Calu3 (cell line): ENCODE measurements at regions of chr9 and their contacts with region 1.

Region 1: GRCh38 chr9:130682490-130683121 is 11.0 kb upstream of the EXOSC2 start:
- DNase-seq: peak; percentile 76
- H3K4me3 Mint-ChIP-seq: peak overlapping the region; percentile 65
- H3K27ac Mint-ChIP-seq: no peak overlapping the region
- H3K4me1 Mint-ChIP-seq: peaks cover 7% of the 10 kb centered on the region
- H3K27me3 Mint-ChIP-seq: peaks cover 14% of the 10 kb centered on the region
- CTCF ChIP-seq: peak; percentile 48

Region 2: GRCh38 chr9:130498298-130498917 is 184.2 kb before region 1 on chr9:
- CTCF ChIA-PET with region 1: no interaction called
- intact Hi-C with region 1: no loop called
- DNase-seq: no peak
- H3K4me3 Mint-ChIP-seq: no peak overlapping the region
- H3K27ac Mint-ChIP-seq: no peak overlapping the region
- H3K4me1 Mint-ChIP-seq: peaks cover 11% of the 10 kb centered on the region
- H3K27me3 Mint-ChIP-seq: no peaks in the 10 kb centered on the region
- CTCF ChIP-seq: no peak

Region 3: DNA sequence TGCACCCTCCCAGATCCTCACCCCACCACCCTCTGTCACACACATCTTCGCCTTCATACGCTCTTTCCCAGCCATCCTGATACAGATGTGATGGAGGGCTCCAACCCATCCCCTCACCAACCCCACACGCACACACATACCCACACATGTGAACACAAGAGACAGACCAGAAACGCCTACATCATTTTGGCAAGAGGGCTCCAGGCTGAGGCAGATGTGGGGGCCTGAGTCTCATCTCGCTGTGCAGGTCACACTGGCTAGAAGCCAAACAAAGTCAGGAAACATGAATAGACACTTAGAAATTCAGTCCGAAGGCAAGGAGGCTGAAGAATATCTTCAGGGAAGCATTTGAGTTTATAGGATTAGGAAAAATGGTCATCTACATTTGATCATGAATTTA is 12.0 kb before region 1 on chr9:
- CTCF ChIA-PET with region 1: interaction called, 10 read pairs
- intact Hi-C with region 1: no loop called
- DNase-seq: no peak
- H3K4me3 Mint-ChIP-seq: no peak overlapping the region
- H3K27ac Mint-ChIP-seq: no peak overlapping the region
- H3K4me1 Mint-ChIP-seq: no peaks in the 10 kb centered on the region
- H3K27me3 Mint-ChIP-seq: peaks cover 38% of the 10 kb centered on the region
- CTCF ChIP-seq: no peak